Lower lobe of right lung (tissue), 2 donors: ENCODE measurements at regions of chr14 and their contacts with region 1.

Region 1: DNA sequence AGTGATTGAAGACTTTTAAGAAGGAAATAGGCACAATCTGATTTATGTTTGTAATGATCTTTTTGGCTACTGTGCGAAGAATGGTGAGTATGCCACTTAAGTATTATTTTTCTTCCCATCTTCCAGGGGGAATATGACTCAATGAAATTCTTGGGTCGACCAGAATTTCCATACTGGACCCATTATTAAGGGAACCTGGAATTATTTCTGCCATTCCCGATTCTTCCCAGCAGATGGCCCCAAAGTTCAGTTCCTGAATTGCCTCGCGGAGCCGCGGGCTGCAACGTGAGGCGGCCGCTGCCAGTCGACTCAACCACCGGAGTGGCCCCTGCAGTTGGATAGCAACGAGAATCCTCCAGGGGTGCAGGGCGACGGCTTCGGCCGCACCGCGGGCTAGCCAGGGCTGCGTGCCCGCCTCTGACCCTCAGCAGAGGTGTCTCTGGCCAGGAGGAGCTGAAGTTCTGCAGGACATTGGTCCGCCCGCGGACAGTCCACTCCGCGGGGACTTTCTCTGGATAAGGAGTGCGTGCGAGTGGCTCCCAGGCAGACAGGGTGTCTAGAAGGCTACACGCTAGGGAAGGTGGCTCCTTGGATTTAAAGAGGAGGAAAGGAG is 628 bp upstream of the TSHR start:
- DNase-seq: peak; percentile 85
- ATAC-seq: peak; percentile 93 to 94
- H3K4me3 ChIP-seq: peak overlapping the region; percentile 56
- H3K27ac ChIP-seq: no peak overlapping the region
- H3K4me1 ChIP-seq: peaks cover 10% of the 10 kb centered on the region
- H3K27me3 ChIP-seq: peaks cover 7% of the 10 kb centered on the region
- CTCF ChIP-seq: peak; percentile 85

Region 2: DNA sequence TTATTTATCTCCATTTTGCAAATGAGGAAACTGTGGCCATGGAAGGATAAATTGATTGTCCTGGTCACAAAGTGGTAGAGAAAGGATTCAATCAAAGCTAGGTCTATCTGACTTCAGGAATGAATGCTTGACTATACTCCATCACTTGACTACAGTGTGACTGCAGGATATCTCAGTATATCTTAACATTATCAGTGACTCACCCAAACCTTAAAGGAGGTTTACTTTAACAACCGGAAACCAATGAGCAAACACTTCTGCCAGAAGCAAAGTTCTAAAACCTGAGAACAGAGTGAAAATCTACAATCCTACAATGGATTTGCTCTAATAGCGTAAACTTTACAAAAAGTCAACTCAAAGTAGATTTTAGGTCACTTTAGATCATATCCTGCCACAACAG is 290.2 kb before region 1 on chr14:
- intact Hi-C with region 1: no loop called
- DNase-seq: no peak
- ATAC-seq: no peak
- H3K4me3 ChIP-seq: no peak overlapping the region
- H3K27ac ChIP-seq: no peak overlapping the region
- H3K4me1 ChIP-seq: no peaks in the 10 kb centered on the region
- H3K27me3 ChIP-seq: no peaks in the 10 kb centered on the region
- CTCF ChIP-seq: no peak

Region 3: GRCh38 chr14:80987235-80988032 is 32.6 kb after region 1 on chr14:
- intact Hi-C with region 1: loop called (anchors 5 kb)
- DNase-seq: no peak
- ATAC-seq: peak; percentile 82 to 85
- H3K4me3 ChIP-seq: no peak overlapping the region
- H3K27ac ChIP-seq: no peak overlapping the region
- H3K4me1 ChIP-seq: no peaks in the 10 kb centered on the region
- H3K27me3 ChIP-seq: no peaks in the 10 kb centered on the region
- CTCF ChIP-seq: peak; percentile 91